Cardiac septum (tissue), 1 donor: ENCODE measurements at regions of chr9 and their contacts with region 1.

Region 1: GRCh38 chr9:18707061-18707461 is 233.1 kb downstream of the ADAMTSL1 start:
- DNase-seq: no peak

Region 2: GRCh38 chr9:18768951-18769622 is 62.0 kb after region 1 on chr9:
- intact Hi-C with region 1: no loop called
- DNase-seq: no peak

Region 3: GRCh38 chr9:18786911-18787650 is 80.0 kb after region 1 on chr9:
- intact Hi-C with region 1: loop called (anchors 10 kb)
- DNase-seq: no peak

Region 4: DNA sequence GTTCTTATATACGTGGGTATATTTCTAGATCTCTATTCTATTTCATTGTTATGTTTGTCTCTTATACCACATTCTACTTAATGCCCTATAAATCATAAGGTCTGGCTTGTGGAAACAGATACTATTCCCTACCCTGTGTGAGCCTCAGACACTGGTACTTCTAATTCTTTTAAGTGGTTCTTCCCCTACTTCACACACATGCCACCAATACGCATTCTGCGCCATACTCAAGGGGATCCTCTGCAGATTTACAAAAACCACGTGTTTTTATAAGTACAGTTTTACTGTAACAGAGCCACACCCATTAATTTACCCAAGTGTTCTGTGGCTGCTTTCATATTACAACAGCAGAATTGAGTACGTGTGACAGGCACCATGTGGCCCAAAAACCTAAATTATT is 130.3 kb after region 1 on chr9:
- intact Hi-C with region 1: no loop called
- DNase-seq: no peak

Region 5: GRCh38 chr9:18985464-18985951 is 278.4 kb after region 1 on chr9:
- intact Hi-C with region 1: loop called (anchors 10 kb)
- DNase-seq: no peak